ENCODE measurements at regions of chr9 and their contacts with region 1.

Region 1: GRCh38 chr9:3732077-3733038 is 206.6 kb upstream of the RFX3 start:
- DNase-seq: peak; percentile 72
- H3K4me3 ChIP-seq: no peak overlapping the region
- H3K27ac ChIP-seq: no peak overlapping the region
- H3K4me1 ChIP-seq: no peaks in the 10 kb centered on the region
- H3K27me3 ChIP-seq: no peaks in the 10 kb centered on the region
- CTCF ChIP-seq: peak; percentile 77 to 84

Region 2: GRCh38 chr9:3118080-3118479 is 614.3 kb before region 1 on chr9:
- CTCF ChIA-PET with region 1: no interaction called
- dilution Hi-C with region 1: no loop called
- in situ Hi-C with region 1: no loop called
- intact Hi-C with region 1: no loop called
- DNase-seq: peak; percentile 32
- H3K4me3 ChIP-seq: no peak overlapping the region
- H3K27ac ChIP-seq: no peak overlapping the region
- H3K4me1 ChIP-seq: no peaks in the 10 kb centered on the region
- H3K27me3 ChIP-seq: no peaks in the 10 kb centered on the region
- CTCF ChIP-seq: no peak

Region 3: DNA sequence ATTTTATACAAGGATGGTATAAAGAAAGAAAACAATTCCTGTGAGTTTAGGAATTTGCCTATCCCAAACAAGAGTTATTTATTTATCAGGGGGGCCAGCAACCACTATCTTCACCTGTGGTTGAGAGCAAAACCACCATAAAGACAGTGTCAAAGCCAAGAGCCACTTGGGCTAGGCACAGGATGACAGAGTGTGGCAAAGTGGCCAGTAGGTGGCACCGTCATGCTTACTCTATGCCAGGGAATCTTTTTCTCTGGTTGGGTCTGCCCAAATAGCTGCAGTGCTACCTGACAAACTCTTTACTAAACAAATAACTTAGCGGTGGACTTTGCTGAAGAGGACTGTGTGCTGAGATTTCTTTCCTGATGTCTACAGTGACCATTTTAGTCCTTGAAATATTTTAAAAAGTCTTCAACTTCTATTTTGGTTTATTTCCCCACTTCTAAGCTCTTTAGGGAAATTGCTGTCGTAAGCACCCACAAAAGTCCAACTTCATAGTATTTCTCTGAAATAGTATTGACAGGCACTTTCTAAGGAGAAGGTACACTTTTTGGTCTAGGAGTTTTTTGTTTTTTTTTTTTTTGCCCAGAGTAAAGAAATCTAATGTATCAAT is 491.6 kb before region 1 on chr9:
- CTCF ChIA-PET with region 1: no interaction called
- dilution Hi-C with region 1: no loop called
- in situ Hi-C with region 1: no loop called
- intact Hi-C with region 1: loop called (anchors 10 kb)
- DNase-seq: peak; percentile 52
- H3K4me3 ChIP-seq: no peak overlapping the region
- H3K27ac ChIP-seq: no peak overlapping the region
- H3K4me1 ChIP-seq: no peaks in the 10 kb centered on the region
- H3K27me3 ChIP-seq: no peaks in the 10 kb centered on the region
- CTCF ChIP-seq: peak; percentile 85 to 90

Region 4: DNA sequence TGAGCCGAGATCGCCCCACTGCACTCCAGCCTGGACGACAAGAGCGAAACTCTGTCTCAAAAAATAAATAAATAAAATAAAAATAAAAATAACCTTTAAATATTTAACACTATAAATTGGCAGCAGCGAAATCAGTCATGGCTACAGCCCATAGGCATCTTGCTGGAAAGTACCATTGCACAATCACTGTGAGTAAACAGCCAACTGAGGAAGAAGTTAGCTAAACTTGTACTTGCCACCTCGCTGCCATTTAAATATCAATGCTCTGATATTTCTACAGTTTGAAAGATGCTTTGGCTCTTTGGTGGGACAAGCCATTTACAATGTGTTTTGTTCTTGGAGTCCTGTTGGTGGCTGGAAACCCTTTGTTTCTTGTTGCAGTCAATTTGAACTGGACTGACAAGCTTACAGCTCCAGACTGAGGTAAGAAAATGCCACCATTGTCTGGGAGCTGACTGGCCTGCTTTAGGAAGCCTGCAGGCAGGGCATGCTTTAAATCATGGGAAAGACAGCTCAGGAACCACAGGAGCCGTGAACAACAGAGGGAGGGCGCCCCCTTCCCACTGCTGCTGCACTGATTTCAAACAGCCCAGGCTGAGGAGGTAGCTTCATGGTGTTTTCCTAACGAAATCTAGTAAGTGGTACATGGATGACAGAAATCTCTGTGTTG is 116.2 kb after region 1 on chr9:
- CTCF ChIA-PET with region 1: no interaction called
- dilution Hi-C with region 1: no loop called
- in situ Hi-C with region 1: no loop called
- intact Hi-C with region 1: loop called (anchors 1 kb)
- DNase-seq: peak; percentile 57
- H3K4me3 ChIP-seq: no peak overlapping the region
- H3K27ac ChIP-seq: no peak overlapping the region
- H3K4me1 ChIP-seq: no peaks in the 10 kb centered on the region
- H3K27me3 ChIP-seq: no peaks in the 10 kb centered on the region
- CTCF ChIP-seq: peak; percentile 13 to 40

Region 5: GRCh38 chr9:3993773-3994540 is 261.6 kb after region 1 on chr9:
- CTCF ChIA-PET with region 1: no interaction called
- dilution Hi-C with region 1: no loop called
- in situ Hi-C with region 1: no loop called
- intact Hi-C with region 1: loop called (anchors 2 kb)
- DNase-seq: no peak
- H3K4me3 ChIP-seq: no peak overlapping the region
- H3K27ac ChIP-seq: no peak overlapping the region
- H3K4me1 ChIP-seq: no peaks in the 10 kb centered on the region
- H3K27me3 ChIP-seq: no peaks in the 10 kb centered on the region
- CTCF ChIP-seq: peak in 1 of 2 donors; percentile 41

Region 6: GRCh38 chr9:4197548-4197947 is 465.2 kb after region 1 on chr9:
- CTCF ChIA-PET with region 1: interaction called, 9 read pairs
- dilution Hi-C with region 1: no loop called
- in situ Hi-C with region 1: no loop called
- intact Hi-C with region 1: loop called (anchors 1 kb)
- DNase-seq: peak; percentile 34
- H3K4me3 ChIP-seq: no peak overlapping the region
- H3K27ac ChIP-seq: no peak overlapping the region
- H3K4me1 ChIP-seq: no peaks in the 10 kb centered on the region
- H3K27me3 ChIP-seq: no peaks in the 10 kb centered on the region
- CTCF ChIP-seq: peak; percentile 65 to 69

Region 7: GRCh38 chr9:4297151-4297785 is 564.9 kb after region 1 on chr9:
- CTCF ChIA-PET with region 1: no interaction called
- dilution Hi-C with region 1: no loop called
- in situ Hi-C with region 1: no loop called
- intact Hi-C with region 1: loop called (anchors 2 kb)
- DNase-seq: peak; percentile 84
- H3K4me3 ChIP-seq: peak overlapping the region; percentile 43 to 62 (median 57)
- H3K27ac ChIP-seq: peak overlapping the region; percentile 64
- H3K4me1 ChIP-seq: peaks cover 64% of the 10 kb centered on the region
- H3K27me3 ChIP-seq: no peaks in the 10 kb centered on the region
- CTCF ChIP-seq: peak in 1 of 2 donors; percentile 58

Region 8: DNA sequence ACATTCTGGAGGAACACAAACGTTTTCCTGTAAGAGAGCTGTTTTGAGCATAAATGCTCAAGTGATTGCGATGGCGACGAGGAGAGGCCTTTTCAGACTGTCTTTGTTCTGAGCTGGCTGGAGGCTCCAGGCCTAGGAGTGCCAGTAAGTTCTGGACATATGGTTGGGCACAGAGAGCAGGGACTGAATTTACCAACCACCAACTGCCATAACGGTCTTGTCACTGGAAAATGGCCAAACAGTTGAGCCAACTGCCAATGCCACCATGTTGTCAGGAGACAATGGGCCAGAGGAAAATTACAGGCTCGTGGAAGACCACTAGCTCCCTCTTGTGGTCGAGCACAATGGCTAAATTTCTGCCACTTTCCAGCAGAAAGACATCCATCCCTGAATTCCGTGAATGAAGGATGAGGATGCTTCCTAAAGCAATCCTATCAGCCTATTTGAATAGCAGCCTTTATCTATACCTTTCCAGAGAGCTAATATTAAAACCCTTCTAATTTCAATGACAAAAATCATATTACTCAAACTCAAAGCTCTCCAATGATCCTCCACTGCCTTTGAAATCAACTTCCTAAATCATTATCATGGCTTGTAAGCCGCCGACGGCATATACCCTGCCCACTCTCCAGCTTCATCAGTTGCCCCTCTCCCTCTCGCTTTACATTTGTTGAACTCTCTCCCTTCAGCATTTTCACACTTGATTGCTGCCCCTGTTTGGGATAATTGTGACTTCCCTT is 634.4 kb after region 1 on chr9:
- CTCF ChIA-PET with region 1: no interaction called
- dilution Hi-C with region 1: no loop called
- in situ Hi-C with region 1: loop called (anchors 10 kb)
- intact Hi-C with region 1: loop called (anchors 1 kb)
- DNase-seq: peak; percentile 39
- H3K4me3 ChIP-seq: no peak overlapping the region
- H3K27ac ChIP-seq: no peak overlapping the region
- H3K4me1 ChIP-seq: no peaks in the 10 kb centered on the region
- H3K27me3 ChIP-seq: no peaks in the 10 kb centered on the region
- CTCF ChIP-seq: peak; percentile 85 to 91